ENCODE measurements at regions of chr9 and their contacts with region 1.

Region 1: DNA sequence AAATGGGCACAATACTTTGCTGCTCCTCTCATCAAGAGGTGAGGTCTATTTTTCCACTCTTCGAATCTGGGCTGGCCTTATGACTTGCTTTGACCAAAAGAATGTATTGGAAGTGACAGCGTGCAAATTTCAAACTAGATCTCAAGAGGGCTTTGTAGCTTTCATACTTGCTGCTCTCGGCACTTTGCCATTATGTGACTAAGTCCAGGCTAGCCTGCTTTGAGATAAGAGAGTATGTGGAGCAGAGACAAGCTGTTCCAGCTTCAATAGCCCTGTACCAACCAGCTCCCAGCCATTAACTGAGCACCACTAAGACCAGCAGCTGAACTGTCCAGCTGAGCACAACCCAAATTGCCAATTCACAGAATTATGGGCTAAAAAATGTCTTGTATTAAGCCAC is 124.6 kb downstream of the ACER2 start:
- DNase-seq: no peak
- H3K4me3 Mint-ChIP-seq: no peak overlapping the region
- H3K27ac Mint-ChIP-seq: no peak overlapping the region
- H3K4me1 Mint-ChIP-seq: no peaks in the 10 kb centered on the region
- H3K27me3 Mint-ChIP-seq: peaks cover 7% of the 10 kb centered on the region
- CTCF ChIP-seq: no peak

Region 2: GRCh38 chr9:19116107-19116790 is 417.1 kb before region 1 on chr9:
- CTCF ChIA-PET with region 1: interaction called, 10 read pairs
- intact Hi-C with region 1: no loop called
- DNase-seq: no peak
- H3K4me3 Mint-ChIP-seq: no peak overlapping the region
- H3K27ac Mint-ChIP-seq: no peak overlapping the region
- H3K4me1 Mint-ChIP-seq: peaks cover 5% of the 10 kb centered on the region
- H3K27me3 Mint-ChIP-seq: no peaks in the 10 kb centered on the region
- CTCF ChIP-seq: no peak

Measured in Calu3 (cell line).